ENCODE measurements at regions of chr14 and their contacts with region 1.

Region 1: GRCh38 chr14:41022932-41023331 is 583.7 kb upstream of the LRFN5 start:
- DNase-seq: no peak
- ATAC-seq: no peak
- H3K4me3 ChIP-seq: no peak overlapping the region
- H3K4me3 Mint-ChIP-seq: no peak overlapping the region
- H3K27ac ChIP-seq: no peak overlapping the region
- H3K27ac Mint-ChIP-seq: no peak overlapping the region
- H3K4me1 ChIP-seq: no peaks in the 10 kb centered on the region
- H3K4me1 Mint-ChIP-seq: no peaks in the 10 kb centered on the region
- H3K27me3 ChIP-seq: no peaks in the 10 kb centered on the region
- H3K27me3 Mint-ChIP-seq: no peaks in the 10 kb centered on the region
- CTCF ChIP-seq: no peak

Region 2: DNA sequence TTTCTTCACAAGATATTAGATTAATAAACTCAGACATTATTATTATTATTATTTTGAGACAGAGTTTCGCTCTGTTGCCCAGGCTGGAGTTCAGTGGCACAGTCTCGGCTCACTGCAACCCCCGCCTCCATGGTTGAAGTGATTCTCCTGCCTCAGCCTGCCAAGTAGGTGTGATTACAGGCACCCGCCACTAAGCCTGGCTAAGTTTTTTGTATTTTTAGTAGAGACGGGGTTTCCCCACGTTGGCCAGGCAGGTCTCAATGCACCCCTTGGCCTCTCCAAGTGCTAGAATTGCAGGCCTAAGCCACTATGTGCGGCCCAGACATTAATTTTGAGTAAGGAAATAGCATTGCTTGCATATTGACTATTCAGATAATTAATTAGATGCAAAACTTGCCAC is 28.9 kb after region 1 on chr14:
- CTCF ChIA-PET with region 1: no interaction called
- POLR2A ChIA-PET with region 1: no interaction called
- intact Hi-C with region 1: loop called in 1 of 2 experiments (anchors 1 kb)
- DNase-seq: no peak
- ATAC-seq: no peak
- H3K4me3 ChIP-seq: no peak overlapping the region
- H3K4me3 Mint-ChIP-seq: no peak overlapping the region
- H3K27ac ChIP-seq: no peak overlapping the region
- H3K27ac Mint-ChIP-seq: no peak overlapping the region
- H3K4me1 ChIP-seq: no peaks in the 10 kb centered on the region
- H3K4me1 Mint-ChIP-seq: no peaks in the 10 kb centered on the region
- H3K27me3 ChIP-seq: no peaks in the 10 kb centered on the region
- H3K27me3 Mint-ChIP-seq: no peaks in the 10 kb centered on the region
- CTCF ChIP-seq: no peak

Region 3: DNA sequence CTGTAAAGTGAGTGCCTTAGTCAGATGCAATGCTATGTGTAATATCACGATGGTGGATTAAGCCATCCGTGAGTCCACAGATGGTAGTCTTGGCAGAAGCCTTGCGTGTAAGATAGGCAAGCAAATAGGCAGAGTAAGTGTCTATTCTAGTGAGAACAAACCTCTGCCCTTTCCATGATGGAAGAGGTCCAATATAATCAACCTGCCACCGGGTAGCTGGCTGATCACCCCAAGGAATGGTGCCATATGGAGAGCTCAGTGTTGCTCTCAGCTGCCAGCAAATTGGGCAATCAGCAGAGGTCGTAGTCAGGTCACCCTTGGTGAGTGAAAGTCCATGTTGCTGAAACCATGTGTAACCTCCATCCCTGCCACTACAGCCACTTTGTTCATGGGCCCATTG is 212.5 kb after region 1 on chr14:
- CTCF ChIA-PET with region 1: no interaction called
- POLR2A ChIA-PET with region 1: no interaction called
- intact Hi-C with region 1: no loop called
- DNase-seq: no peak
- ATAC-seq: no peak
- H3K4me3 ChIP-seq: no peak overlapping the region
- H3K4me3 Mint-ChIP-seq: no peak overlapping the region
- H3K27ac ChIP-seq: no peak overlapping the region
- H3K27ac Mint-ChIP-seq: no peak overlapping the region
- H3K4me1 ChIP-seq: no peaks in the 10 kb centered on the region
- H3K4me1 Mint-ChIP-seq: no peaks in the 10 kb centered on the region
- H3K27me3 ChIP-seq: no peaks in the 10 kb centered on the region
- H3K27me3 Mint-ChIP-seq: no peaks in the 10 kb centered on the region
- CTCF ChIP-seq: no peak

Measured in CD4-positive, alpha-beta T cell (primary cell).